Heart left ventricle (tissue), 16 donors: ENCODE measurements at regions of chr2 and their contacts with region 1.

Region 1: GRCh38 chr2:115083225-115083624 is 640.8 kb downstream of the DPP10 start:
- DNase-seq: no peak
- ATAC-seq: no peak
- H3K4me3 ChIP-seq: no peak overlapping the region
- H3K27ac ChIP-seq: no peak overlapping the region
- H3K4me1 ChIP-seq: no peaks in the 10 kb centered on the region
- H3K27me3 ChIP-seq: no peaks in the 10 kb centered on the region
- CTCF ChIP-seq: peak in 1 of 12 donors; percentile 16
- POLR2A ChIP-seq: no peak

Region 2: GRCh38 chr2:114729026-114729425 is 354.2 kb before region 1 on chr2:
- intact Hi-C with region 1: loop called in 4 of 10 experiments (anchors 1 to 10 kb)
- DNase-seq: no peak
- ATAC-seq: no peak
- H3K4me3 ChIP-seq: no peak overlapping the region
- H3K27ac ChIP-seq: no peak overlapping the region
- H3K4me1 ChIP-seq: no peaks in the 10 kb centered on the region
- H3K27me3 ChIP-seq: no peaks in the 10 kb centered on the region
- CTCF ChIP-seq: peak in 9 of 12 donors; percentile 20 to 49 (median 42)
- POLR2A ChIP-seq: no peak

Region 3: GRCh38 chr2:114735126-114735525 is 348.1 kb before region 1 on chr2:
- intact Hi-C with region 1: loop called in 2 of 10 experiments (anchors 10 kb)
- DNase-seq: no peak
- ATAC-seq: no peak
- H3K4me3 ChIP-seq: no peak overlapping the region
- H3K27ac ChIP-seq: no peak overlapping the region
- H3K4me1 ChIP-seq: no peaks in the 10 kb centered on the region
- H3K27me3 ChIP-seq: no peaks in the 10 kb centered on the region
- CTCF ChIP-seq: no peak
- POLR2A ChIP-seq: no peak

Region 4: GRCh38 chr2:115201386-115201785 is 118.2 kb after region 1 on chr2:
- intact Hi-C with region 1: no loop called
- DNase-seq: no peak
- ATAC-seq: no peak
- H3K4me3 ChIP-seq: no peak overlapping the region
- H3K27ac ChIP-seq: no peak overlapping the region
- H3K4me1 ChIP-seq: no peaks in the 10 kb centered on the region
- H3K27me3 ChIP-seq: no peaks in the 10 kb centered on the region
- CTCF ChIP-seq: no peak
- POLR2A ChIP-seq: no peak

Region 5: GRCh38 chr2:115389024-115389423 is 305.8 kb after region 1 on chr2:
- intact Hi-C with region 1: no loop called
- DNase-seq: no peak
- ATAC-seq: no peak
- H3K4me3 ChIP-seq: no peak overlapping the region
- H3K27ac ChIP-seq: no peak overlapping the region
- H3K4me1 ChIP-seq: no peaks in the 10 kb centered on the region
- H3K27me3 ChIP-seq: no peaks in the 10 kb centered on the region
- CTCF ChIP-seq: no peak
- POLR2A ChIP-seq: no peak